Mammary epithelial cell (primary cell): ENCODE measurements at regions of chr18 and their contacts with region 1.

Region 1: DNA sequence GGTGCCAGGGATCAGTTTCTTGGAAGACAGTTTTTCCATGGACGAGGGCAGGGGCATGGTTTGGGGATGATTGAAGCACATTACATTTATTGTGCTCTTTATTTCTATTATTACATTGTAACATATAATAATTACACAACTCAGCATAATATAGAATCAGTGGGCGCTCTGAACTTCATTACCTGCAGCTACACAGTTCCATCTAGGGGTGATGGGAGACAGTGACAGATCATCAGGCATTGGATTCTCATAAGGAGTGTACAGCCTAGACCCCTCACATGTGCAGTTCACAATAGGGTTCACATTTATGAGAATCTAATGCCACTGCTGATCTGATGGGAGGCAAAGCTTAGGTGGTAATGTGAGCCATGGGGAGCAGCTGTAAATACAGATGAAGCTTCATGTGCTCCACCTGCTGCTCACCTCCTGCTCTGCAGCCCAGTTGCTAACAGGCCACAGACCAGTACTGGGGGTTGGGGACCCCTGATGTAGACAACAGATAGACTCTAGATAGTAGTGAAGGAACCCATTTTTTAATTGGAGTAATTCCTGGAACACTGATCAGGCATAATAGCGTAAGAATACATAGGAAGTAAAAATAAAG is 41.5 kb upstream of the MC4R start:
- DNase-seq: peak; percentile 1
- H3K4me3 ChIP-seq: no peak overlapping the region
- H3K27ac ChIP-seq: no peak overlapping the region
- H3K4me1 ChIP-seq: no peaks in the 10 kb centered on the region
- H3K27me3 ChIP-seq: peaks cover 3% of the 10 kb centered on the region
- CTCF ChIP-seq: peak; percentile 29 to 75

Region 2: GRCh38 chr18:60090170-60090569 is 323.9 kb before region 1 on chr18:
- CTCF ChIA-PET with region 1: no interaction called
- dilution Hi-C with region 1: no loop called
- in situ Hi-C with region 1: no loop called
- intact Hi-C with region 1: loop called (anchors 1 kb)
- DNase-seq: no peak
- H3K4me3 ChIP-seq: no peak overlapping the region
- H3K27ac ChIP-seq: no peak overlapping the region
- H3K4me1 ChIP-seq: no peaks in the 10 kb centered on the region
- H3K27me3 ChIP-seq: no peaks in the 10 kb centered on the region
- CTCF ChIP-seq: peak in 1 of 2 donors; percentile 34

Region 3: GRCh38 chr18:60506682-60507081 is 92.6 kb after region 1 on chr18:
- CTCF ChIA-PET with region 1: no interaction called
- dilution Hi-C with region 1: no loop called
- in situ Hi-C with region 1: no loop called
- intact Hi-C with region 1: no loop called
- DNase-seq: no peak
- H3K4me3 ChIP-seq: no peak overlapping the region
- H3K27ac ChIP-seq: no peak overlapping the region
- H3K4me1 ChIP-seq: no peaks in the 10 kb centered on the region
- H3K27me3 ChIP-seq: peaks cover 3% of the 10 kb centered on the region
- CTCF ChIP-seq: no peak